ENCODE measurements at regions of chr2 and their contacts with region 1.

Region 1: GRCh38 chr2:105114551-105114950 is 76.7 kb downstream of the MRPS9 start:
- DNase-seq: peak; percentile 61

Region 2: GRCh38 chr2:104983980-104984379 is 130.6 kb before region 1 on chr2:
- CTCF ChIA-PET with region 1: no interaction called
- POLR2A ChIA-PET with region 1: no interaction called
- DNase-seq: no peak

Region 3: DNA sequence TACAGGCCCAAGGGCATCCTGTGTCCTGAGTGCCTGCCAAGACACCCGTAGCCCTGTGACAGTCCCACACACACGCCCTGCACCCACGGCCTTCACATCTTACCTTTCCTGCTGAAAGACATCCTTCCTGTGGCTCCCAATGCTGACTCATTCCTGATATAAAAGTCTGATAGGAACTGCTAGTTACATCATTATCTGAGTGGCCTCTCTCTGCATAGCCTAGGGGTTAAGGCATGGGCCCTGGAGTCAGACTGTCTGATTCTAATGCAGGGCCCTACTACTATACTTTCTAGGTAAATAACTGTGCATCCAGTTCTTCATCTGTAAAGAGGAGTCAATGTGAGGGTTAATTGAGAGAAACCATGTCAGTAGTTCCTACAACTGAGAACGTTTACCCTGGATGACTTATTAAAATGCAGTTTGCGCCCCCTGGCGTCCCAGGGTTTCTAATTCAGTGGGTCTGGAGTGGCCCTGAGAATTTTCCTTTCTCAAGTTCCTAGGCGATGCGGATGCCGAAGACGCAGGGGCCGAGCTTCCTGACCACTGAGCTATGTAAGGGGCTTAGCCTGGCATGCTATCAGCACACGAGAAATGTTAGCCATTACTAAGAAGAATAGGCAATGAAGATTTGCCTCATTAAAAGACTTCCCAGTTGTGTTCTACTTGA is 121.0 kb after region 1 on chr2:
- CTCF ChIA-PET with region 1: interaction called, 35 read pairs
- POLR2A ChIA-PET with region 1: no interaction called
- DNase-seq: peak; percentile 54

Measured in HEK293T (cell line).